Ascending aorta (tissue), 2 donors: ENCODE measurements at regions of chr10 and their contacts with region 1.

Region 1: DNA sequence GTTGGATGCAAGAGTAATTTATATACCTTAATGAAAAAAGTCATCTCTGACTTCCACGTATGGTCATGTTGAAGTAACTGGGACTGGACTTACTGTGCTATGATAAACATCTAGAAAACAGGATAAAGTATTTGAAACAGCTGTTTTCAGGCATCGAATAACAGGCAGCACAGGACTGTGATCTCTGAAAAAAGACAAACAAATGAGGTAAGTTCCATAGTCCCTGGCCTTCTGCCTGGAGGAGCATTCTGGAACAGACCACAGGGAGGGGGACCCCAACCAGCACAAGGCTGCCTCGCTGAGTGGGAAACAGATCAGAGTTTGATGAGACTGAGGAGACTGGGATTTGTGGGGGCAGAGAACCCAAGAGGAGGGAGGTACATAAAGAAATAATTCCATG is 89.1 kb upstream of the HABP2 start:
- DNase-seq: no peak
- H3K4me3 ChIP-seq: no peak overlapping the region
- H3K27ac ChIP-seq: no peak overlapping the region
- H3K4me1 ChIP-seq: no peaks in the 10 kb centered on the region
- H3K27me3 ChIP-seq: no peaks in the 10 kb centered on the region
- CTCF ChIP-seq: no peak

Region 2: DNA sequence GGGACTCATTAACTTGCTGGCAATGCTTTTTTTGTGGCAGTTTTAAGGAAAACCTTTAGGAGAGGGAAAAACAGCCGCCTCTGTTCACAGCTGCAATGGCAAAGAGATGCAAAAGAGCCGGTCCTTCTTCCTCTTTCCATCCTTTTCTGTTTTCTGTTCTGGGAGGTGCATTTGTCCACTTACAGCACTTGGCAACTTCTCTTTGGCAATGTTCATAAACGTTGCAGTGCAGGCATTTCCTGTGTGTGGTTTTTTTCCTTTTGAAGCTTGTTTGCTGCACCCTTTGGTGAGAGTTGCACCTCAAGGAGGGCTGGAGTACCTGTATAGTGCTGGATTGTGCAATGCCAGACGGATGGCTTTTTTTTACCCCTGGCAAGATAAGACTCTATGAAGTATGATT is 35.2 kb after region 1 on chr10:
- intact Hi-C with region 1: loop called (anchors 5 kb)
- DNase-seq: no peak
- H3K4me3 ChIP-seq: no peak overlapping the region
- H3K27ac ChIP-seq: no peak overlapping the region
- H3K4me1 ChIP-seq: peaks cover 0 to 35% of the 10 kb centered on the region in 2 donors
- H3K27me3 ChIP-seq: no peaks in the 10 kb centered on the region
- CTCF ChIP-seq: no peak

Region 3: DNA sequence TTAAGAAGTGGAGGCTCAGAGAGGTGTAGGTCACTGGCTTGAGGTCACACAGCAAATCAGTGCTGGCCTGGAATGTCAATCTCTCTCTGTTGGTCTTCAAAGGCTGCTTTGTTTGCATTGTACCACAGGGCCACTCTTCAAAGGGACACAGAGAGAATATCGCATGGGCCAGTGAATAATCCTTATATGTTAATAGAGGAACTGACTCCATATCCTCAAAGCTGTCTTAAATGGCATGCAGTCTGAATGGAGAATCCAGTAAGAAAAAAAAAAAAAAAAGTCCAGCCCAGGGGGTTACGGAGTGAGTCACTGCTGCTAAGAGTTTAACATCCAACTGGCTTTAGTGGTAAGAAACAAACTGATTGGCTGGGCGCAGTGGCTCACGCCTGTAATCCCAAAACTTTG is 145.9 kb after region 1 on chr10:
- intact Hi-C with region 1: no loop called
- DNase-seq: no peak
- H3K4me3 ChIP-seq: no peak overlapping the region
- H3K27ac ChIP-seq: no peak overlapping the region
- H3K4me1 ChIP-seq: no peaks in the 10 kb centered on the region
- H3K27me3 ChIP-seq: no peaks in the 10 kb centered on the region
- CTCF ChIP-seq: no peak

Region 4: GRCh38 chr10:114166084-114166483 is 702.3 kb after region 1 on chr10:
- intact Hi-C with region 1: loop called (anchors 10 kb)
- DNase-seq: no peak
- H3K4me3 ChIP-seq: no peak overlapping the region
- H3K27ac ChIP-seq: no peak overlapping the region
- H3K4me1 ChIP-seq: peaks cover 0 to 12% of the 10 kb centered on the region in 2 donors
- H3K27me3 ChIP-seq: no peaks in the 10 kb centered on the region
- CTCF ChIP-seq: no peak